Testis (tissue), 5 donors: ENCODE measurements at regions of chr1 and their contacts with region 1.

Region 1: DNA sequence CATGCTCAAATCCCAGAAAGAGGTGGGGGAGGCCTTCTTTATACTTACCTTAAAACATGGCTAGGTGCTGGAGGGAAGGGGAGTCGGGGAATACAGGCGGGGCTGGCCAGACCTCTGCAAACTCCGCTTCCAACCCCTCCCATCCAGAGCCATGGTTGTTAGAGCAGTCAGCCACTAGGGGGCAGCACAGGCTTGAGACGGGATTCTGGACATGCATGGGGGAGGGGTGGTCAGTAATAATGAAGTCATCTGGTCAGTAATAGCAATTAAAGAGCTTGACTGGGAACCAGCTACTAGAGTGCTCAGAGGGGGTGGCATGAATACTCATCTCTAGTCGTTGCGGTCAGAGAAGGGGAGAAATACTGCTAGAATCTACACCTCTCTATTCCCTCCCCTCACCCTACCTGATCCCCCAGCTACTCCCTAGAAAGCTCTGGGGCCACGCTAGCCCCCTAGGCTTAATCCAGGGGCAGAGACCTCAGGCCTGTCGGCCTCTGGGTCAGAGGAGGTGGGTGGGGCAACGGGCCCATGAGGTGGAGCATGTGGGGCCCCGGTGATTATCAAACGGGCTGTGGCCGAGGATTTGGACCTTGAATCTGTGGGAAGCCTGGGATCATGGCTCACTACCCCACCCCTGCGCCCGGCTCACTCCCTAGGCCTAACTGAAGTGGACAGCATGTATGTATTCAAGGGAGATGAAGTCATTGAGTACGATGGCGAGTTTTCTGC is 2.9 kb downstream of the CASQ1 start:
- DNase-seq: peak; percentile 92
- H3K4me3 ChIP-seq: no peak overlapping the region
- H3K27ac ChIP-seq: no peak overlapping the region
- H3K4me1 ChIP-seq: peaks cover 11% of the 10 kb centered on the region
- H3K27me3 ChIP-seq: no peaks in the 10 kb centered on the region
- CTCF ChIP-seq: peak; percentile 93 to 98 (median 98)
- POLR2A ChIP-seq: no peak

Region 2: GRCh38 chr1:160101037-160101716 is 92.1 kb before region 1 on chr1:
- intact Hi-C with region 1: loop called (anchors 10 kb)
- DNase-seq: peak; percentile 90
- H3K4me3 ChIP-seq: no peak overlapping the region
- H3K27ac ChIP-seq: peak overlapping the region; percentile 70 to 75
- H3K4me1 ChIP-seq: peaks cover 45% of the 10 kb centered on the region
- H3K27me3 ChIP-seq: no peaks in the 10 kb centered on the region
- CTCF ChIP-seq: peak; percentile 93 to 98 (median 96)
- POLR2A ChIP-seq: no peak

Region 3: DNA sequence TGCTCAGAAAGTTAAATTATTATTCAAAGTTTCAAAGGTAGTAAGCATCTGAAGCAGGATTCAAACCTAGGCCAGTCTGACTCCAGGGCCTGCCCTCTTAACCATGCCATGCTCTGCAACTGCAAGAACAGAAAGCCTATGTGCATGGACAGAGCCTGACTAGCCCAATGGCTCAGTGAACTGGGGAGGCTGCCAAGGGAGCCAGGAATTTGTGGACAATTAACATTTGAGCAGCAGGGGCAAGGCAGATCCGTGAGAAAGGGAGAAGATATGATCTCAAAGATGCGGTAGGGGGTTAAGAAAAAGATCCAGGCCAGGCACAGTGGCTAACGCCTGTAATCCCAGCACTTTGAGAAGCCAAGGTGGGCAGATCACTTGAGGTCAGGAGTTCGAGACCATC is 48.3 kb before region 1 on chr1:
- intact Hi-C with region 1: no loop called
- DNase-seq: no peak
- H3K4me3 ChIP-seq: no peak overlapping the region
- H3K27ac ChIP-seq: no peak overlapping the region
- H3K4me1 ChIP-seq: no peaks in the 10 kb centered on the region
- H3K27me3 ChIP-seq: no peaks in the 10 kb centered on the region
- CTCF ChIP-seq: no peak
- POLR2A ChIP-seq: no peak

Region 4: GRCh38 chr1:160244209-160244608 is 51.0 kb after region 1 on chr1:
- intact Hi-C with region 1: loop called (anchors 10 kb)
- DNase-seq: no peak
- H3K4me3 ChIP-seq: no peak overlapping the region
- H3K27ac ChIP-seq: no peak overlapping the region
- H3K4me1 ChIP-seq: peaks cover 10% of the 10 kb centered on the region
- H3K27me3 ChIP-seq: no peaks in the 10 kb centered on the region
- CTCF ChIP-seq: no peak
- POLR2A ChIP-seq: no peak

Region 5: DNA sequence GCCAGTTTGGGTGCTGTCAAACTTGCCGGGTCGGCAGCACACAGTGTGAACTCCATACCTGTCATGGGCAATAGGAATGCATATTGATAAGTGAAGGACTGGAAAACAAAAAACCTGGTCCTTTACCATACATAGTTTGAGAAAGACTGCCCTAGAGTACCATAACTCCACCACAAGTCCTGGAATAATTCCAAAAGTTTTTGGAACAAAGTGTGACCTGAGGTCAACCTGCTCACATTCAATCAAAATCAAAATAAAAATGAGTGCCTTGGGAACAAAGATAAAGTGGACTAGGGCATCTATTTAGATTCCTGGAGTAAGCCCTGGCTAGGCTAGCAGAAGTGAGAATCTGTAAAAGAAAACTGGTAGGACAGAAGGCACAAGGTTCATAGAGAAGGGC is 84.1 kb after region 1 on chr1:
- intact Hi-C with region 1: no loop called
- DNase-seq: no peak
- H3K4me3 ChIP-seq: no peak overlapping the region
- H3K27ac ChIP-seq: no peak overlapping the region
- H3K4me1 ChIP-seq: no peaks in the 10 kb centered on the region
- H3K27me3 ChIP-seq: no peaks in the 10 kb centered on the region
- CTCF ChIP-seq: no peak
- POLR2A ChIP-seq: no peak

Region 6: GRCh38 chr1:160800645-160801408 is 607.6 kb after region 1 on chr1:
- intact Hi-C with region 1: no loop called
- DNase-seq: no peak
- H3K4me3 ChIP-seq: no peak overlapping the region
- H3K27ac ChIP-seq: no peak overlapping the region
- H3K4me1 ChIP-seq: no peaks in the 10 kb centered on the region
- H3K27me3 ChIP-seq: no peaks in the 10 kb centered on the region
- CTCF ChIP-seq: no peak
- POLR2A ChIP-seq: no peak